ENCODE measurements at regions of chr3 and their contacts with region 1.

Region 1: DNA sequence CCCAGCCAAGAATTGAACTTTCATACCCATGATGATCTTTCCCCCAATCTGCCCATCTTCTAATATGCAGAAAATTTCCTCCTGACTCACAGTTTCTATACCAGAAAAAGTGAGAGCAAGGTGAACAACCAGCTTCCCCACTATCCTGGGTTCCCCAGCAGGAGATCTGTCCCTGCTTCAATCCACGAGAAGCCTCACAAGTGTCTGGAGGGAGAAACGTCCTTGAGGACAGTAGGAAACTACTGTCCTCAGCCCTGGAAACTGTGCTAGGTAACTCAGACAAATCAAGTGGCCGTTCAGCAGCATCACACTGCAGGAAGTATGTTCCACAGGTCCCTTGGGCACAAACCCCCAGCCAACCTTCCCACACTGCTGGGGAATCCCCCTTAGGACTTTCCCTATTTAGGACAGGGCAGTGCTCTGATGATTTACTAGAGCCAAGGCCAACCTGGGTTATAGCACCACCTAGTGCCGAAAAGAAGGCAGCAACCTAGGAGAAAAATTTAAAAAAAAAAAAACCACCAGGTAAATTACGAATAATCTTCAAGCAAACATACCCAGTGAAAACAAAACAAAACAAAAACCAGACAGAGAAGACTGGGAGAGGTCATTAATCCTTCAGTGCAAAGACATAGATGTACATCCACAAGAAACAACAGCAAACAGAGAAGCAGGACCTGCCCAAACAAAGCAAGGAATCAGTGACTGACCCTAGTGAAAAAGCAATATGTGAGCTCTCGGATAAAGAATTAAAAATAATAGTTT is 36.0 kb downstream of the MORC1 start:
- DNase-seq: peak; percentile 76
- H3K4me3 Mint-ChIP-seq: no peak overlapping the region
- H3K27ac Mint-ChIP-seq: no peak overlapping the region
- H3K4me1 Mint-ChIP-seq: peaks cover 4% of the 10 kb centered on the region
- H3K27me3 Mint-ChIP-seq: peaks cover 43% of the 10 kb centered on the region

Region 2: GRCh38 chr3:107604057-107604822 is 1477.7 kb before region 1 on chr3:
- intact Hi-C with region 1: no loop called
- DNase-seq: no peak
- H3K4me3 Mint-ChIP-seq: no peak overlapping the region
- H3K27ac Mint-ChIP-seq: no peak overlapping the region
- H3K4me1 Mint-ChIP-seq: peaks cover 23% of the 10 kb centered on the region
- H3K27me3 Mint-ChIP-seq: no peaks in the 10 kb centered on the region

Region 3: DNA sequence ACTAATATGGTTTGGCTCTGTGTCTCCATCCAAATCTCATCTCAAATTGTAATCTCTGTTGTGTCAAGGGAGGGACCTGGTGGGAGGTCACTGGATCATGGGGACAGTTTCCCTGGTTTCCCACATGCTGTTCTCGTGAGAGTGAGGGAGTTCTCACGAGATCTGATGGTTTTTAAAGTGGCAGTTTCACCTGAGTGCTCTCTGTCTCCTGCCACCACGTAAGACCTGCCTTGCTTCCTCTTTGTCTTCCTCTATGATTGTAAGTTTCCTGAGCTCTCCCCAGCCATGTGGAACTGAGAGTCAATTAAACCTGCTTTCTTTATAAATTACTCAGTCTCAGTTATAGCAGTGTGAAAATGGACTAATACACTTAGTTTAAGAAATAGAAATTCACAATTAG is 1220.0 kb before region 1 on chr3:
- intact Hi-C with region 1: no loop called
- DNase-seq: no peak
- H3K4me3 Mint-ChIP-seq: no peak overlapping the region
- H3K27ac Mint-ChIP-seq: no peak overlapping the region
- H3K4me1 Mint-ChIP-seq: no peaks in the 10 kb centered on the region
- H3K27me3 Mint-ChIP-seq: peaks cover 6% of the 10 kb centered on the region

Region 4: GRCh38 chr3:108662130-108662738 is 419.7 kb before region 1 on chr3:
- intact Hi-C with region 1: loop called (anchors 1 kb)
- DNase-seq: peak; percentile 86
- H3K4me3 Mint-ChIP-seq: no peak overlapping the region
- H3K27ac Mint-ChIP-seq: no peak overlapping the region
- H3K4me1 Mint-ChIP-seq: peaks cover 8% of the 10 kb centered on the region
- H3K27me3 Mint-ChIP-seq: peaks cover 2% of the 10 kb centered on the region

Region 5: GRCh38 chr3:109023656-109024254 is 58.2 kb before region 1 on chr3:
- intact Hi-C with region 1: loop called (anchors 1 kb)
- DNase-seq: peak; percentile 77
- H3K4me3 Mint-ChIP-seq: no peak overlapping the region
- H3K27ac Mint-ChIP-seq: no peak overlapping the region
- H3K4me1 Mint-ChIP-seq: no peaks in the 10 kb centered on the region
- H3K27me3 Mint-ChIP-seq: peaks cover 14% of the 10 kb centered on the region

Region 6: GRCh38 chr3:109154979-109155378 is 73.1 kb after region 1 on chr3:
- intact Hi-C with region 1: no loop called
- DNase-seq: no peak
- H3K4me3 Mint-ChIP-seq: no peak overlapping the region
- H3K27ac Mint-ChIP-seq: no peak overlapping the region
- H3K4me1 Mint-ChIP-seq: no peaks in the 10 kb centered on the region
- H3K27me3 Mint-ChIP-seq: no peaks in the 10 kb centered on the region

Measured in activated CD4-positive, alpha-beta T cell treated with anti-CD3 and anti-CD28 coated beads, Interleukin-2, amount 10 ng/mL, durations not matched to agents 24 days and 14 days (primary cell).